ENCODE measurements at regions of chr6 and their contacts with region 1.

Region 1: GRCh38 chr6:85537055-85537494 is 56.6 kb downstream of the SNX14 start:
- DNase-seq: no peak
- H3K4me3 ChIP-seq: no peak overlapping the region
- H3K27ac ChIP-seq: peak overlapping the region; percentile 35; the same call in 1 of the 2 replicates
- H3K4me1 ChIP-seq: peaks cover 11% of the 10 kb centered on the region
- H3K27me3 ChIP-seq: no peaks in the 10 kb centered on the region
- CTCF ChIP-seq: peak; percentile 77

Region 2: DNA sequence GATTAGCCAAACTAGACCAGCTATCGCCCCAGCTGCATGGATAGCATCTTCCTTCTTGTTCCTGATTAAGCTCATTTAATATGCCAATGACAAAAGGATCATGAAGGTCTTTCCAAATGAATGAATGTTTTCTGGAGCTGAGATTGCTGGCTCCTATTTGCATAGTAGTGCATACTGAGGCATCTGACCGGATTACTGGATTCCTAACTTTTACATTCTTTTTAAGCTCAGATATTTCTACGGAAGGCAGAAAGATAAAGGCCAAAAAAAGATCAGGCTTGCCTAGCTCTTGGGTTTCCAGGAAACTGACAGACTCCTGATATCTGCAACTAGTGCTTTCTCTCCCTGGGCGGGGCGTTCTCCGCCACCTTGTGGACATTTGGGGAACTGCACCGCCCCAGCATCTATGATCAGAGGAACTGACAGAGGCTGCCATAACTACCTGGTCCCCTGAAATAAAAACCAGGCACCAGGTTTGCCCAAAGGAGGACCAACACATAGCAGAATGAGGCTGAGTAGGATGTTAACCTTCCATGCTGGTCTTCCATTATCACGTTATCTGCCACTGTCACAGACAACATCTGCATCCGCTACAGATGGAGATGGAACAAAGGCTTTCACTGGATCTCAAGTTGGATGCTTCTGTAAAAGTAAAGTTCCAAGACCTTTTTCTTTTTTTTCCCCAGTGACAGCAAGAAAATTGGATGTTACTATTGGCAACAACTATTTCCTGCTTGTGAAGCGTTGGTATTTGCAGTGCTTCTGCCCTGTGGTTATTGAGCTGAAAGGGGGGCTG is 54.0 kb before region 1 on chr6:
- CTCF ChIA-PET with region 1: interaction called, 6 read pairs
- POLR2A ChIA-PET with region 1: no interaction called
- intact Hi-C with region 1: loop called (anchors 5 kb)
- DNase-seq: peak; percentile 37 to 71
- H3K4me3 ChIP-seq: no peak overlapping the region
- H3K27ac ChIP-seq: peak overlapping the region; percentile 3; the same call in 1 of the 2 replicates
- H3K4me1 ChIP-seq: no peaks in the 10 kb centered on the region
- H3K27me3 ChIP-seq: no peaks in the 10 kb centered on the region
- CTCF ChIP-seq: peak; percentile 98

Region 3: GRCh38 chr6:85516168-85516567 is 20.9 kb before region 1 on chr6:
- CTCF ChIA-PET with region 1: no interaction called
- POLR2A ChIA-PET with region 1: interaction called, 18 read pairs
- intact Hi-C with region 1: no loop called
- DNase-seq: peak in 1 of 2 experiments; percentile 75
- H3K4me3 ChIP-seq: no peak overlapping the region
- H3K27ac ChIP-seq: peak overlapping the region; percentile 77
- H3K4me1 ChIP-seq: peaks cover 18% of the 10 kb centered on the region
- H3K27me3 ChIP-seq: no peaks in the 10 kb centered on the region
- CTCF ChIP-seq: no peak

Region 4: GRCh38 chr6:85714893-85715530 is 177.9 kb after region 1 on chr6:
- CTCF ChIA-PET with region 1: no interaction called
- POLR2A ChIA-PET with region 1: no interaction called
- intact Hi-C with region 1: no loop called
- DNase-seq: no peak
- H3K4me3 ChIP-seq: no peak overlapping the region
- H3K27ac ChIP-seq: no peak overlapping the region
- H3K4me1 ChIP-seq: no peaks in the 10 kb centered on the region
- H3K27me3 ChIP-seq: no peaks in the 10 kb centered on the region
- CTCF ChIP-seq: no peak